ENCODE measurements at regions of chr9 and their contacts with region 1.

Region 1: DNA sequence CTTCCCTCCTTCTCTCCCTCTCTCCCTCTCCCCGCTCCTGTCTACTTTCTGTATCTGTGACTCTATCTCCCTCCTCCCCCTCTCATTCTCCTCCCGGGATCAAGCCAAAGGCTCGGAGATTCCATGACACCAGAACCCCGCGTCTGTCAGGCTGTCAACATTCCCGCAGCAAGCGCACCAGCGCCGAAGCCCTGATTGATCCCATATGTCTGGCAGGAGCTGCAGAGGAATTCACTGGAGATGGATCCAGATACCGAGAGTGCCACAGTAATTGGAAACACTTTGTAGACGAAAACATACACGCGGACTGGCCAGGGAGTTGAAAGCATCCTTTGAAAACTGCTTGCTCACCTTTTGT is 300 bp upstream of the SVEP1 start:
- DNase-seq: no peak
- H3K4me3 Mint-ChIP-seq: no peak overlapping the region
- H3K27ac Mint-ChIP-seq: no peak overlapping the region
- H3K4me1 Mint-ChIP-seq: peaks cover 4% of the 10 kb centered on the region
- H3K27me3 Mint-ChIP-seq: peaks cover 36% of the 10 kb centered on the region

Region 2: DNA sequence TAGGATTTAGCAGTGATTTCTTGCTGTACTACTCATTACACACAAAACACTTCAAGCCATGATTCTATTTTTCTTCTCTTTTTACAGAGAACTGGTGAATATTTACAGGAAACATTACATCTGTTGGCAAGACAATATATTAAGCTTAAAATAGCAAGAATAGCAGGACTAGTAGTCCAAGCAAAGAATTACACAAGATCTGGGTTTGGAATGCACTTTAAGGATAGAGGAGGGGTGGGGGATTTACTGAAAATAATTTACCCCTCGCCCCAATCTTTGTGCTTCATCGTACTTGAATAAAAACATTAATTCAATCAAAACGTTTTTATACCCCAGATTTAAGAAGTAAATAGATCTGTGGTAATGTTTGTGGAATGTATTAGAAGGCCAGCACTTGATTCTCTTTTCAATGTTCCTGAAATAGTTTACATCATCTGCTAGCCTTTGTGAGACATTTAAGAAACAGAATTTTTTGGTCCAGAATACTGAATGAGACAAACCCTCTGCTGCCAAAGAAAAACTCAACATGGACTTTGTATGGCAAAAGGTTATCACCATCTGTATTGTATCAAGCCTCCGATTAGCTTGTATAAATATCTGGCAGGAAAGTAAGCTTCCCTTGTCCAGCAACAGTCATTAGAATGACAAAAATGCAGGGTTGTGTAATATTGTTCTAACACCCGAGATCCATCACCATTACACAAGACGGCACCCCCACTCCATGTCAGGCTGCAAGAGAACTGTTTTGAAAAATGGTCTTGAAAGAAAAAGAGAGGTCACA is 24.1 kb before region 1 on chr9:
- intact Hi-C with region 1: no loop called
- DNase-seq: no peak
- H3K4me3 Mint-ChIP-seq: no peak overlapping the region
- H3K27ac Mint-ChIP-seq: no peak overlapping the region
- H3K4me1 Mint-ChIP-seq: no peaks in the 10 kb centered on the region
- H3K27me3 Mint-ChIP-seq: peaks cover 4% of the 10 kb centered on the region

Region 3: DNA sequence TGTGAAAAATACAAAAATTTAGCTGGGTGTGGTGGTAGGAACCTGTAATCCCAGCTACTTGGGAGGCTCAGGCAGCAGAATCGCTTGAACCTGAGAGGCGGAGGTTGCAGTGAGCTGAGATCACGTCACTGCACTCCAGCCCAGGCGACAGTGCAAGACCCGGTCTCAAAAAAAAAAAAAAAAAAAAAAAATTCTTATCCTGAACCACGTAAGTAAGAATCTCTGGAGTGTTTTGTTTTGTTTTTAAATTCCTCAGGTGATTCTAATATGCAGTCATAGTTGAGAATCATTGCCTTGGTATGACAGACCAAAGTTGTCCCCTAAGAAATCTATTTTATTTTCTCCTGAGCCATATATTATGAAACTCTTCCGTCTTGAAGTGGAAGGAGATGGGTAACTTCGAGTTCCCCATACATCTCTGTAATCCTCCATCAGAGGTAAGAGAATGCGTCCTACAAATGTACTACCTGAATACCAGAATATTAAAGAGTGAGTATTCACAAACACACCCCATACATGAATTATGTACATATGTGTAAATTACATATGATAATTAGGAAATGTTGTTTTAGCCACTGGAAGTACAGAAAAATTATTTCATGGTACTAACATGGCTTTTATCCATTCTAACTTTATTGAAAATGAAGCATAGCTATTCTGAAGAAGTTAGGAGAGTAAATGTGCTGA is 26.4 kb after region 1 on chr9:
- intact Hi-C with region 1: loop called (anchors 1 kb)
- DNase-seq: no peak
- H3K4me3 Mint-ChIP-seq: no peak overlapping the region
- H3K27ac Mint-ChIP-seq: no peak overlapping the region
- H3K4me1 Mint-ChIP-seq: no peaks in the 10 kb centered on the region
- H3K27me3 Mint-ChIP-seq: peaks cover 2% of the 10 kb centered on the region

Measured in activated T-helper 1 cell treated with anti-CD3 and anti-CD28 coated beads, Interleukin-12 subunit alpha, Interleukin-12 subunit beta, Interleukin-2, Interleukin-4 antibody, amounts not matched to agents 30 ng/mL and 10 ng/mL and 1 ng/mL, durations not matched to agents 14 hours and 24 hours and 36 hours (primary cell).